AG04449 (cell line): ENCODE measurements at regions of chr10 and their contacts with region 1.

Region 1: GRCh38 chr10:28241741-28242399 is 61.0 kb downstream of the MPP7 start:
- DNase-seq: no peak
- H3K4me3 ChIP-seq: no peak overlapping the region
- CTCF ChIP-seq: peak; percentile 67

Region 2: DNA sequence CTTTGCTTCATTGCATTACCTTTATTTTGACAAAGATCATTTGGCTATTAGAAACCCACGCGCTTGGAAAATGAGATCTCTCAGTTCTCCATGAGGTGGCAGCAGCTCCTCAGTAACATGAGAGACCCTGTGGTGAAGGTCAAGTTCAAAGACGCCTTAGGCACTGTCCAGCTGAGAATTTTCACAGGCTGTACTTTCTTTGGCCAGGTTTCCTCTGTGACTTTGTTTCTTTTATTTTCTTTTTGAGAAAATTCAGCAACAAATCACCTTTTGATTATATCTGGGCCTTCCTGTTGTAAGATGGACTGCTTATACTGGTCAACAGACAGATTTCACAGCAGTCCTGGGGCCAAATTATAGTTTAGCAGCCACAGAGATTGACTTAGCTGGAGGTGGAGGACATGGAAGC is 683.3 kb before region 1 on chr10:
- CTCF ChIA-PET with region 1: interaction called, 10 read pairs
- POLR2A ChIA-PET with region 1: no interaction called
- DNase-seq: peak; percentile 10
- H3K4me3 ChIP-seq: no peak overlapping the region
- CTCF ChIP-seq: peak; percentile 71

Region 3: DNA sequence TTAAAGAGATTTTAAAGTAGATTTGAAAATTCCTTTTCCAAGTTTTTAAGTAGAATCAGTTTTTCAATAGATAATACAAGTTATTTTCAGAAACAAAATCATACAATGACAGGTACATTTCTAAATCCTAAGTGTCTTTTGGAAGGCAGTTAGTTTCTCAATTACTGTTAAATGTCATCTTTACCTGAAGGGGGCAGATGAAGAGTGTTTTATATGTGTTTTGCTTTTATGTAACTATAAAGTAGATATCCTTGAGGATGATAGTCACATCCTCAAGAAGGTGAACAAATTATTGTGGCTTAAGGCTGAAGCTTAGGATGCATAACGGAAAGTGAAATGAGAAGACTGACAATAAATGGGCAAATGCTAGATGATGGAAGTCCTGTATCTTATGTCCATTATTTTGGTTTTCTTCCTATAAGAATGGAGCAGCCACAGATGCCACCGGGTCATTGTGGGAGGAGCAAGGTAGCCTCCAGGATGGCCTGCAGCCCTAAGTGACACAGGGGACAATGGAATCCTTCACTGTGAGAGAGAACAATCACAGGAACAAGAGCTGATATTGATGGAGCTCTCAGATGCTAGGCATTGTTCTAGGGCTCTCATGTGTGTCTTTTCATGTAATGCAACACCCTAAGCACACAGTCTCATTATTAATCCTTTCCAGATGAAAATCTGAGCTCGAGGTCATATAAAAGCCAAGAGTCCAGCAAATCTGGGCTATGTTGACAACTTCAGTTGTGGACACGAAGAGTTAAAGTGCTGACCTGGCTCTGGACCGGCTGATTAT is 482.2 kb before region 1 on chr10:
- CTCF ChIA-PET with region 1: interaction called, 14 read pairs
- POLR2A ChIA-PET with region 1: no interaction called
- DNase-seq: no peak
- H3K4me3 ChIP-seq: no peak overlapping the region
- CTCF ChIP-seq: no peak

Region 4: DNA sequence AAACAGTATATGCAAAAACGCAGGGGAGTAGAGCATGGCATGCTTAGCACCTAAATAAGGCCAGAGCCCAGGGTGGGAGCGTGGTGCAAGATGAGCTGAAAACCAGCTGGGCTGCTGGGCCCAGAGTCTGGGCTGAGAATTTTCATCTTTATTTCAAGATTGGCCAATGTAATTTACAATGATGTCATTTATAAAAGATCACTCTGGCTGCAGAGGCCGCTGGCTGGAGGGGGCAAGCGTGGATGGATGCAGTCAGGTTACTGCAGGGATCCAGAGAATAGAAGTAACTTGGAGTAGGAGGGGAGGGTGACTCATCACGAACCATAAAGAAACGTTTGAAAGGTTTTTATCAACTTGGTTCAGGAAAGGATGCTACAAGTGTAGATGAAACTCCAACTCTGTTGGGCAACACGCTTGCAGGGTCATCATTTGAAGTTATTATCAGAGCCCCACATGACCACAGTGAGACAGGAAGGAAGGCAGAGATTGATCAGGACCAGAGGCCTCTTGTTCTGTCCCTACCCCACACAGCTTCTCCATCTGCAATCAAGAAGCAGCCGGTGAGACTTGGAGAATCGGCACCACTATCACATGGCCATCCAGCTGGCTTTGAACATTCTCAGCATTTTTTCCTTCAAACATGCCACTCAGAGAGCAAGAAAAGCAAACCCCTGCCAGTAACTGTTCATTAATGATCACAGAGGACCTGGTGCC is 292.2 kb before region 1 on chr10:
- CTCF ChIA-PET with region 1: no interaction called
- POLR2A ChIA-PET with region 1: no interaction called
- DNase-seq: no peak
- H3K4me3 ChIP-seq: no peak overlapping the region
- CTCF ChIP-seq: no peak

Region 5: GRCh38 chr10:28179006-28179742 is 62.7 kb before region 1 on chr10:
- CTCF ChIA-PET with region 1: interaction called, 13 read pairs
- POLR2A ChIA-PET with region 1: no interaction called
- DNase-seq: no peak
- H3K4me3 ChIP-seq: no peak overlapping the region
- CTCF ChIP-seq: peak; percentile 30

Region 6: GRCh38 chr10:28359334-28359733 is 117.5 kb after region 1 on chr10:
- CTCF ChIA-PET with region 1: no interaction called
- POLR2A ChIA-PET with region 1: no interaction called
- DNase-seq: no peak
- H3K4me3 ChIP-seq: no peak overlapping the region
- CTCF ChIP-seq: no peak

Region 7: GRCh38 chr10:28381903-28382347 is 140.1 kb after region 1 on chr10:
- CTCF ChIA-PET with region 1: interaction called, 399 read pairs
- POLR2A ChIA-PET with region 1: no interaction called
- DNase-seq: peak; percentile 65
- H3K4me3 ChIP-seq: no peak overlapping the region
- CTCF ChIP-seq: peak; percentile 78